ENCODE measurements at regions of chr5 and their contacts with region 1.

Region 1: DNA sequence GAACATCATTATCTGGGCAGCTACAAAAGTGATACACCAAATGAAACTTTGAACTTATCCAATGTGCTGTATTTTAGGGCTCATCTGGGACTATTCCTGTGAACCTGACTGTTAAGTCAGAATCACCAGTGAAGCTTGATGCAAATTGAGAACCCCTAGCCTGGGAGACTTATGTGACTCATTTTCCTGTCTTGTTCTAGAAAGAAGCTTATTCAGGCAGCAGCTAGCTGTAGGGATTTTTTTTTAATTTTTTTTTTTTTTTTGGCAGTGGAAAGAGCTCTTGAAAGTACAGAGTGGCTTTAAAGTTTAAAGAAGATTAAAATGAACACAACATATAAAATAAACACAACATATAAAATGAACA is 81.1 kb upstream of the TNFAIP8 start:
- DNase-seq: peak; percentile 50
- H3K4me3 Mint-ChIP-seq: peak overlapping the region; percentile 72
- H3K27ac Mint-ChIP-seq: peak overlapping the region; percentile 97
- H3K4me1 Mint-ChIP-seq: peaks cover 88% of the 10 kb centered on the region
- H3K27me3 Mint-ChIP-seq: no peaks in the 10 kb centered on the region

Region 2: GRCh38 chr5:119070828-119071572 is 203.7 kb before region 1 on chr5 and contains the start of gene DMXL1:
- CTCF ChIA-PET with region 1: no interaction called
- intact Hi-C with region 1: loop called (anchors 1 kb)
- DNase-seq: peak; percentile 100
- H3K4me3 Mint-ChIP-seq: peak within 1 kb of the TSS; percentile 95
- H3K27ac Mint-ChIP-seq: peak within 1 kb of the TSS; percentile 97
- H3K4me1 Mint-ChIP-seq: peaks cover 38% of the 10 kb centered on the region
- H3K27me3 Mint-ChIP-seq: peaks cover 2% of the 10 kb centered on the region
- total RNA-seq, gene DMXL1: 16.4 to 18.0 TPM

Region 3: DNA sequence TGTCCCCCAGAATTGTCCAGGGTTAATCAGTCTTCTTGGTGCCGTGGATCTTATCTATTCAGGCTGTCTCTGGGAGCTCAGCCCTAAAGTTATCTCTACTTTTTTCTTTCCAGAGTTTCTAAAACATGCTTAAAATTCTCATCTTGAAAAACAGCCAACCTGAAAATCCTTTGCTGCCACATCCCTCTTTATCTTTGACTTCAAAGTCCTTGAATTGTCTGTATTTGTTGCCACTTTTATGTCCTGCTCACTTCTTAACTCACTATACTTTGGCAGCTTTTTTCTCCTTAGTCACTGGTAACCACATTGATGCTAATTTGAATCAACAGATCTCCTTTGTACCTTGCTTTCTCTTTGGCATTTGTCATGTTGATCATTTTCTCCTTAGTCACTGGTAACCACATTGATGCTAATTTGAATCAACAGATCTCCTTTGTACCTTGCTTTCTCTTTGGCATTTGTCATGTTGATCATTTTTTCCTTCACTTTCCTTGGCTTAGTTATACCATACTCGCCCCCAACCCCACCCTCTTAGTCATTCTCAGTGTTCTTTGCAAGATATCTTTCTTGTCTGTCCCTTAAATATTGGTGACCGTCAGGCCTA is 195.3 kb before region 1 on chr5:
- CTCF ChIA-PET with region 1: no interaction called
- intact Hi-C with region 1: loop called (anchors 1 kb)
- DNase-seq: peak; percentile 59
- H3K4me3 Mint-ChIP-seq: no peak overlapping the region
- H3K27ac Mint-ChIP-seq: peak overlapping the region; percentile 54
- H3K4me1 Mint-ChIP-seq: peaks cover 52% of the 10 kb centered on the region
- H3K27me3 Mint-ChIP-seq: no peaks in the 10 kb centered on the region

Region 4: GRCh38 chr5:119250946-119251901 is 23.5 kb before region 1 on chr5:
- CTCF ChIA-PET with region 1: no interaction called
- intact Hi-C with region 1: no loop called
- DNase-seq: no peak
- H3K4me3 Mint-ChIP-seq: no peak overlapping the region
- H3K27ac Mint-ChIP-seq: no peak overlapping the region
- H3K4me1 Mint-ChIP-seq: peaks cover 21% of the 10 kb centered on the region
- H3K27me3 Mint-ChIP-seq: no peaks in the 10 kb centered on the region

Region 5: GRCh38 chr5:119290161-119290569 is 15.4 kb after region 1 on chr5:
- CTCF ChIA-PET with region 1: interaction called, 7 read pairs
- intact Hi-C with region 1: loop called (anchors 1 kb)
- DNase-seq: peak; percentile 44
- H3K4me3 Mint-ChIP-seq: peak overlapping the region; percentile 19
- H3K27ac Mint-ChIP-seq: peak overlapping the region; percentile 90
- H3K4me1 Mint-ChIP-seq: peaks cover 83% of the 10 kb centered on the region
- H3K27me3 Mint-ChIP-seq: no peaks in the 10 kb centered on the region

Region 6: GRCh38 chr5:119309326-119309725 is 34.6 kb after region 1 on chr5:
- CTCF ChIA-PET with region 1: interaction called, 19 read pairs
- intact Hi-C with region 1: loop called (anchors 1 kb)
- DNase-seq: no peak
- H3K4me3 Mint-ChIP-seq: peak overlapping the region; percentile 21
- H3K27ac Mint-ChIP-seq: peak overlapping the region; percentile 95
- H3K4me1 Mint-ChIP-seq: peaks cover 96% of the 10 kb centered on the region
- H3K27me3 Mint-ChIP-seq: no peaks in the 10 kb centered on the region

Region 7: GRCh38 chr5:119340597-119341218 is 66.0 kb after region 1 on chr5:
- CTCF ChIA-PET with region 1: interaction called, 10 read pairs
- intact Hi-C with region 1: loop called (anchors 1 kb)
- DNase-seq: peak; percentile 68
- H3K4me3 Mint-ChIP-seq: peak overlapping the region; percentile 69
- H3K27ac Mint-ChIP-seq: peak overlapping the region; percentile 96
- H3K4me1 Mint-ChIP-seq: peaks cover 93% of the 10 kb centered on the region
- H3K27me3 Mint-ChIP-seq: no peaks in the 10 kb centered on the region

Measured in activated naive CD4-positive, alpha-beta T cell treated with anti-CD3 and anti-CD28 coated beads for 36 hours (primary cell).